ENCODE measurements at regions of chr14 and their contacts with region 1.

Region 1: DNA sequence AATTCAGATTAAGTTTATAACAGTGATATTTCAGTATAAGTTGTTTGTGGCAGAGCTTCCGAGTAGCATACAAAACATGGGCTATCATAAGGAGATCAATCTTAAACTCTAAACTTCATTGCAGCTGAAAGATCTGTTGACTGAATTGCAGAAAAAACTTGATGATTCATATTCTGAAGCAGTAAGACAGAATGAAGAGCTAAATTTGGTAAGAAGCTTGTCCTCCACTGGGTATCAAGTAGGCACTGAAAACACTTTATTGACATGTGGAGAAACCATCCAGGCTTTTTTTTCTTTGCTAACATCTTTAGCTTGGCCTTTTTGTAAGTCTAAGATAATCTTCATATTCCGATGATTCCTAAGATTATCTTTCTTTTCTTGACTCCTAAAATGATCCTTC is 93.0 kb downstream of the KTN1 start:
- DNase-seq: no peak
- H3K4me3 ChIP-seq: no peak overlapping the region
- H3K27ac ChIP-seq: peak overlapping the region; percentile 38
- H3K4me1 ChIP-seq: peaks cover 4% of the 10 kb centered on the region
- H3K27me3 ChIP-seq: no peaks in the 10 kb centered on the region
- CTCF ChIP-seq: no peak

Region 2: DNA sequence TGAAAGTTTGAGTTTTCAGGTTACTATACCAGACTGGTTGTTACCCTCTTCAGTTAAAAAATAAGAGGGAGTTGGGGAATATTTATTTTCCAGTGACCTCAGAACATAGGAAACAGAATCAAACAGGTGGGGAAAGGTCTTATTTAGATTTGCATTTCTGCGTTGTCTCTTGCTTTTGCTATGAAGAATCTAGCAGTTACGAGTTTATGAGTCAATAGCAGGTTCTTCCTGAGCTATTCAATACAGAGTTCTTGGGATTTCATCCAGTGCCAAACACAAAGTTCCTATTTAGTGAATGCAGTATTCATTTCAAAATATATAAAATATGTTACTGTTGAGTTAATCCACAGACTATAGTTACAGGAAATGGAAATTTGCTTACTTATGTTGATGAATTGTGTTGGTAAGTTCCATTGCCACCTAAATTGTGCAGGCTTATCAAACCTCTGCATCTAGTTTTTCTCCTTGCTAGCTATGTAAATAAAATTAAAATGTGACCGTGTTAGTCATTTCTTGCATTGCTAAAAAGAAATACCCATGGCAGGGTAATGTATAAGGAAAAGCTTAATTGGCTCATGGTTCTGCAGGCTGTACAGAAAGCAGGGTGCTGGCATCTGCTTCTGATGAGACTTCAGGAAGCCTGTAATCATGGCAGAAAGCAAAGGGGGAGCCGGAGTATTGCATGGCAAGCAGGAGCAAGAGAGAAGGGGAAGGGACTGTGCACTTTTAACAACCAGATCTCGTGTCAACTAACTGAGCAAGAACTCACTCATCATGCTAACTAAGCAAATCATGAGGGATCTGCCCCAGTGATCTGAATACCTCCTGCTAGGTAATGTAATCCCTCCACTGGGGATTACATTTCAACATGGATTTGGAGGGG is 17.2 kb after region 1 on chr14:
- CTCF ChIA-PET with region 1: interaction called, 11 read pairs
- POLR2A ChIA-PET with region 1: no interaction called
- intact Hi-C with region 1: no loop called
- DNase-seq: peak; percentile 60
- H3K4me3 ChIP-seq: no peak overlapping the region
- H3K27ac ChIP-seq: peak overlapping the region; percentile 65
- H3K4me1 ChIP-seq: peaks cover 25% of the 10 kb centered on the region
- H3K27me3 ChIP-seq: no peaks in the 10 kb centered on the region
- CTCF ChIP-seq: no peak

Measured in A673 (cell line).